Uterus (tissue), 4 donors: ENCODE measurements at regions of chr11 and their contacts with region 1.

Region 1: DNA sequence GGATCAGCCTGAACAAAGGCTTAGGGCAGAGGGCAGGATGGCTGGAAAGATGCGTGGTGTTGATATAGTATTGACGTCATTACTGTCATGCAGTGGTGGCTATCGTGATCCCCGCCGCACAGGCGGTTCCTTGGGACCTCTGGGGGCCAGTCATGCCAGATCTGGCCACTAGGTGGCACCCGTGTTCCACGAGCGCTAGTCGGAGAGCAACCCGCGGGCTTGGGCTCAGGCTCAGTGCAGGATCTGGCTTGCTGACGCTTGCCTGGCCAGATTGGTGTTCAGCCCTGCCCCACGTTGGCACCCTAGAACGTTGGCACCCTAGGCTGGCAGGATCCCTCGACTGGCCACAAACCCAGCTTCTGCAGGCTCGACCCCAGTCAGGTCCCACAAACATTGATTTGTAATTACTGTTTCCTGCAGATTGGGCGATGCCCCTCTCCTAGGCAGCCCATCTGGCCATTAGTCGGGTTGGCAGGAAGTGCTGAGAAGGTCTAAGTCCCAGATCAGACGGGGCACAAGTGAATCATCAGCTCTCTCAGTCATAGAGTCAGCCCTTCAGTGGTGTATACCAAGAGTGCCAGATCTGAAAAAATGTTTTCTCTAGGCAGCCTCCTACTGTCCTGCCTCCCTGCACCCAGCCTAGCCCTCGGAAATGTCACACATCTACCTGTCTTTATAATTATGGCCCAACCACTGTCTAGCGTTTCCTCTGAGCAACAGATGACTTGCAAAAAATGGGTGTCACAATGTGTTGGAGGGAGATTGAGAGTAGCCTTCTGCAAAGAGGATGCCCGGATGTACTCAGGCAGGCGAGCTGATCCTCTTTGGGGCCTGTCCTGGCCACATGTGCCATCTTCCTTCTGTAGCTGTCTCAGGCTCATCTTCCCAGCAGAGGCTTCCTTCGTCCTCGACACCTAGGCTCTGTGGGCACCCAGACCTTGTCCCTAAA is 315.3 kb downstream of the TMEM135 start:
- DNase-seq: peak; percentile 79 to 84
- H3K4me3 ChIP-seq: no peak overlapping the region
- H3K27ac ChIP-seq: no peak overlapping the region
- H3K4me1 ChIP-seq: no peaks in the 10 kb centered on the region
- H3K27me3 ChIP-seq: no peaks in the 10 kb centered on the region
- CTCF ChIP-seq: peak; percentile 98 to 99 (median 98)
- POLR2A ChIP-seq: no peak

Region 2: GRCh38 chr11:87290304-87290922 is 62.6 kb before region 1 on chr11:
- intact Hi-C with region 1: no loop called
- DNase-seq: no peak
- H3K4me3 ChIP-seq: no peak overlapping the region
- H3K27ac ChIP-seq: no peak overlapping the region
- H3K4me1 ChIP-seq: no peaks in the 10 kb centered on the region
- H3K27me3 ChIP-seq: no peaks in the 10 kb centered on the region
- CTCF ChIP-seq: peak; percentile 62 to 70 (median 64)
- POLR2A ChIP-seq: no peak

Region 3: DNA sequence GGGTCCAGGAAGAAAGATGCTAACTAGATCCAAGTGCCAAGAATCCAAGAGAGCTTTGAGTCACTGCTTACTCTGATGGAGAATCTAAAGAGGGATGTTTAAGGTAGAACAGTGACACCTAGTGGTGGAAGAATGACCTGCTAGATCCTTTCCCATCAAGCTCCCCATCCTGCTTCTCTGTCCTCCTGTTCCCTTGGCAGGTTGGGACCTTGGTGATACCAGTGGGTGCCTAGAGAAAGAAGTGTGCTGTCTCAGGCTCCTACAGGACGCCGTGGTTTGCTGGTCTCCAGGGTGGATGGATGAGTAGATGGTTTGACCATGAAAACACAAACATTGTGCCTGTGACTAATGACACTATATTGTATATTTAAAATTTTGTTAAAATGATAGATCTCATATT is 68.4 kb after region 1 on chr11:
- intact Hi-C with region 1: loop called (anchors 2 kb)
- DNase-seq: peak in 1 of 2 donors; percentile 58
- H3K4me3 ChIP-seq: no peak overlapping the region
- H3K27ac ChIP-seq: no peak overlapping the region
- H3K4me1 ChIP-seq: peaks cover 0 to 7% of the 10 kb centered on the region in 2 donors
- H3K27me3 ChIP-seq: no peaks in the 10 kb centered on the region
- CTCF ChIP-seq: peak; percentile 69 to 71 (median 70)
- POLR2A ChIP-seq: no peak

Region 4: DNA sequence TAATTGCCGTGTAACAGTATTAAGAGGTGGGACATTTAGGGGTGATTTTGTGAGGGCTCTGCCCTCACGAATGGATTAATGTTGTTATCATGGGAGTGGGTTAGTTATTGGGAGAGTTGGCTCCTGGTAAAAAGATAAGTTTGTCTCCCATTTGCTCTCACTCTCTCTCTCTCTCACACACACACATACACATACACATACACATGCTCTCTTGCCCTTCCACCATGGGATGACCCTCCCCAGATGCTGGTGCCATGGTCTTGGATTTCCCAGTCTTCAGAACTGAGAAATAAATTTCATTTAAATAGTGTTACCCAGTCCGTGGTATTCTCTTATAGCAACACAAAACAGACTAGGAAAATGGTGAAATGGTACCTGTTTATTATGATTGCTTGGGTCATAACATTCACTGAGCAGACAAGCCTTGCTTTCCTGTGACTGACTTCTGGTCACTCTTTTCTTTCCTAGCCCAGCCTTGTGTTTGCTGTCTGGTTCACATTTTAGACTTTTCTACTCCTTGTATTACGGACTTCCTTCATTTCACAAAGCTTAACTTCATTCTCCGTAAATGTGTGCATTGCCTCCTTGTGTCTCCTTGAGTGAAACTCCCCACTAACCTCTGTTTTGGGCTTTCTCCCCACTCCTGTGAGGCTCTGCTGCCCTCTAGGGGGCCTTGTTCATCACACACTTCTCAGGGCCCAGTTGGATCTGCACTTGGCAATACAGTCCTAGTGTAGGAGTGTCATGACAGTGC is 1191.0 kb after region 1 on chr11:
- intact Hi-C with region 1: loop called (anchors 10 kb)
- DNase-seq: peak; percentile 79 to 81
- H3K4me3 ChIP-seq: no peak overlapping the region
- H3K27ac ChIP-seq: no peak overlapping the region
- H3K4me1 ChIP-seq: no peaks in the 10 kb centered on the region
- H3K27me3 ChIP-seq: no peaks in the 10 kb centered on the region
- CTCF ChIP-seq: peak; percentile 90 to 94 (median 94)
- POLR2A ChIP-seq: no peak